HCT116 (cell line): ENCODE measurements at regions of chr3 and their contacts with region 1.

Region 1: DNA sequence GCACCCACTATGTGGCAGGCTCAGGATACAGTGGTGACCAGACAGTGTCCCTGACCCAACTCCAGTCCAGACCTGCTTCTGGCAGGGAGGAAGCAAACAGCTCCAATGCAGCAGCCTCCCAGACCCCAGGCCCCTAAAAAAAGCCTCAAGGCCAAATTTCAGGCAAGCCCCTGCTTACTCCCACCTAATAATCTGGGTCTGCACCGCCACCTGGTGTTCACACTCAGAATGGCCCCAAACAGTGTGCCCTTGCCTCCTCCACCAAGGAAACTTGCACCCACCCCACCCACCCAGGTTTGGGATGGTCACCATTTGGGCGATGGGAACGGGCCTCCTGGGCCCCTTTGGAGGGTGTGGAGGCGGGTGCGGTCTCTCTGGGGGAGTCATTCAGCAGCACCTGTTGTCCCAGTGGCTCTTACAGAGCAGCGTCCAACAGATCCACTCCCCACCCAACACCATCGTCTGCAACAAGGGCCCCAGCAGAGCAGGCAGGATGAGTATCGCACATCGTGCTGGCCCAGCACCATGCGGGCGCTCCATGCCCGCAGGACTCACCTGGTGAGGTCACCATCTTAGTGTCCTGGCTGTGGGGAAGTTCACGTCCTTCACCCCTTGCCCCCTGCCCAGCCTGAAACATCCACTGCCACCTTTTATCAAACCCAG is 17.3 kb downstream of the C3orf18 start:
- DNase-seq: no peak
- ATAC-seq: peak; percentile 81
- H3K4me3 ChIP-seq: no peak overlapping the region
- H3K27ac ChIP-seq: no peak overlapping the region; the same call in 1 of the 2 replicates
- H3K4me1 ChIP-seq: peaks cover 12 to 17% of the 10 kb centered on the region in 2 experiments
- H3K27me3 ChIP-seq: no peaks in the 10 kb centered on the region
- CTCF ChIP-seq: peak; percentile 64 to 76 (median 74); a peak in 5 of 6 replicates
- POLR2A ChIP-seq: no peak
- RAD21 ChIP-seq: peak; percentile 81

Region 2: GRCh38 chr3:50350527-50351322 is 199.5 kb before region 1 on chr3 and contains the starts of genes CYB561D2 and NPRL2:
- CTCF ChIA-PET with region 1: no interaction called
- POLR2A ChIA-PET with region 1: interaction called, 3 read pairs
- RAD21 ChIA-PET with region 1: no interaction called
- intact Hi-C with region 1: loop called (anchors 1 kb)
- DNase-seq: peak; percentile 89
- ATAC-seq: peak; percentile 92
- H3K4me3 ChIP-seq: peak within 1 kb of the TSS; percentile 73 to 83
- H3K27ac ChIP-seq: peak within 1 kb of the TSS; percentile 70
- H3K4me1 ChIP-seq: peaks cover 6 to 37% of the 10 kb centered on the region in 2 experiments
- H3K27me3 ChIP-seq: no peaks in the 10 kb centered on the region
- CTCF ChIP-seq: no peak
- POLR2A ChIP-seq: peak; percentile 78
- RAD21 ChIP-seq: no peak
- total RNA-seq, gene CYB561D2: 9.5 TPM
- total RNA-seq, gene NPRL2: 35.4 TPM

Region 3: DNA sequence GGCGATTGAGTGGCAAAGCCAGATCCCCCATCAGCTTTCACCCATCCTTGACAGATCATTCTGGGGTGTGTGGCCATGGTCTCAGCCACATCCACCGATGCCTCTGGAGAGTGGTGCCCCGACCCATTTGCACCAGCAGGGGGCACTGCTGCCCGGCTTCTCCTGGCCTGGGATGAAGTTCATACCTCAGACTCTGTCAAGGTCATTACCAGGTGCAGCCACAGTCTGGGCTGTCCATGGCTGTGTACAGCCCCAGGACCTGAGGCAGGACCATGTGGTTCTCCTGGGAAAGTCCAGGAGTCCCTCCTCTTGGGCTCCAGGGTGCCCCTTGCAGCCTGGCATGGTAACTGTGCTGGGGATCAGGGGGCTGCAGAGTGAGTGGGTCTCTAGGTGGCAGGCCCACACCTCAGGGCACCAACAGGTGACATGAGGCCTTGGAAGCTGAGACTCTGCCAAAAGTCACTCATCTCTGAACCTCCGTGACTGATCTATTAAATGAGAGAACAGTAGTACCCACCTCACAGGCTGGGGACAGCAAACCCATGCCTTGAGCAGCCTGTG is 114.0 kb before region 1 on chr3:
- CTCF ChIA-PET with region 1: interaction called, 6 read pairs
- POLR2A ChIA-PET with region 1: no interaction called
- RAD21 ChIA-PET with region 1: no interaction called
- intact Hi-C with region 1: loop called (anchors 1 kb)
- DNase-seq: peak; percentile 19
- ATAC-seq: peak; percentile 98
- H3K4me3 ChIP-seq: no peak overlapping the region
- H3K27ac ChIP-seq: no peak overlapping the region
- H3K4me1 ChIP-seq: no peaks in the 10 kb centered on the region
- H3K27me3 ChIP-seq: no peaks in the 10 kb centered on the region
- CTCF ChIP-seq: peak; percentile 80 to 97 (median 94)
- POLR2A ChIP-seq: no peak
- RAD21 ChIP-seq: peak; percentile 79

Region 4: GRCh38 chr3:50519471-50520089 is 30.6 kb before region 1 on chr3:
- CTCF ChIA-PET with region 1: no interaction called
- POLR2A ChIA-PET with region 1: no interaction called
- RAD21 ChIA-PET with region 1: no interaction called
- intact Hi-C with region 1: loop called (anchors 1 kb)
- DNase-seq: peak; percentile 60
- ATAC-seq: peak; percentile 97
- H3K4me3 ChIP-seq: no peak overlapping the region
- H3K27ac ChIP-seq: no peak overlapping the region
- H3K4me1 ChIP-seq: peaks cover 0 to 6% of the 10 kb centered on the region in 2 experiments; a peak in 1 of 4 replicates
- H3K27me3 ChIP-seq: peaks cover 7% of the 10 kb centered on the region; the same call in 1 of the 2 replicates
- CTCF ChIP-seq: peak; percentile 89 to 97 (median 97)
- POLR2A ChIP-seq: no peak
- RAD21 ChIP-seq: peak; percentile 76